ENCODE measurements at regions of chr6 and their contacts with region 1.

Region 1: GRCh38 chr6:121849477-121849876 is 414.0 kb downstream of the GJA1 start:
- DNase-seq: peak; percentile 79
- ATAC-seq: peak; percentile 65
- H3K4me3 ChIP-seq: no peak overlapping the region
- H3K27ac ChIP-seq: no peak overlapping the region
- H3K4me1 ChIP-seq: no peaks in the 10 kb centered on the region
- H3K27me3 ChIP-seq: no peaks in the 10 kb centered on the region
- CTCF ChIP-seq: peak; percentile 80

Region 2: DNA sequence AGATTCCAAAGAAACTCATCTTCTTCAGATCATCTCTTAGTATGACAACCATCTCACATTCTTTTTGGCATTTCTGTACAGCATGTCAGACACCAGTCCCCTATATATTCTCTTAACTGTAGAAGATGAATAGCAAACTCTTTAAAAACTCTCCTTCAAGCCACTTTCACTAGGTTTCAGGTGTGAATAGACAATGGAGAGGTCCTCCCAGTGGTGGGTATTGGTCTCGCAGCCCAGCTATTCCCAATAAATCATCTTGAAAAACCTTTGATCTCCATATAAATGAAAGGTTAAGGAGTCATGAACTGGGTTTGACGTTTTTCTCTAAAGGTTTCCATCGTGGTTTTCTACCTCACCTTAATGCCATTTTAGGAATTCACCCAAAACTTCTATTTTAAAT is 234.0 kb before region 1 on chr6:
- CTCF ChIA-PET with region 1: no interaction called
- POLR2A ChIA-PET with region 1: no interaction called
- intact Hi-C with region 1: loop called (anchors 10 kb)
- DNase-seq: peak; percentile 17
- ATAC-seq: no peak
- H3K4me3 ChIP-seq: no peak overlapping the region
- H3K27ac ChIP-seq: no peak overlapping the region
- H3K4me1 ChIP-seq: no peaks in the 10 kb centered on the region
- H3K27me3 ChIP-seq: no peaks in the 10 kb centered on the region
- CTCF ChIP-seq: peak; percentile 44

Measured in PC-3 (cell line).